Endothelial cell of umbilical vein (primary cell): ENCODE measurements at regions of chr10 and their contacts with region 1.

Region 1: GRCh38 chr10:63166742-63167258 is 33.7 kb downstream of the NRBF2 start:
- DNase-seq: peak; percentile 84
- H3K4me3 ChIP-seq: no peak overlapping the region
- H3K27ac ChIP-seq: no peak overlapping the region
- H3K4me1 ChIP-seq: no peaks in the 10 kb centered on the region
- H3K27me3 ChIP-seq: no peaks in the 10 kb centered on the region
- CTCF ChIP-seq: peak; percentile 61 to 62
- POLR2A ChIP-seq: no peak

Region 2: DNA sequence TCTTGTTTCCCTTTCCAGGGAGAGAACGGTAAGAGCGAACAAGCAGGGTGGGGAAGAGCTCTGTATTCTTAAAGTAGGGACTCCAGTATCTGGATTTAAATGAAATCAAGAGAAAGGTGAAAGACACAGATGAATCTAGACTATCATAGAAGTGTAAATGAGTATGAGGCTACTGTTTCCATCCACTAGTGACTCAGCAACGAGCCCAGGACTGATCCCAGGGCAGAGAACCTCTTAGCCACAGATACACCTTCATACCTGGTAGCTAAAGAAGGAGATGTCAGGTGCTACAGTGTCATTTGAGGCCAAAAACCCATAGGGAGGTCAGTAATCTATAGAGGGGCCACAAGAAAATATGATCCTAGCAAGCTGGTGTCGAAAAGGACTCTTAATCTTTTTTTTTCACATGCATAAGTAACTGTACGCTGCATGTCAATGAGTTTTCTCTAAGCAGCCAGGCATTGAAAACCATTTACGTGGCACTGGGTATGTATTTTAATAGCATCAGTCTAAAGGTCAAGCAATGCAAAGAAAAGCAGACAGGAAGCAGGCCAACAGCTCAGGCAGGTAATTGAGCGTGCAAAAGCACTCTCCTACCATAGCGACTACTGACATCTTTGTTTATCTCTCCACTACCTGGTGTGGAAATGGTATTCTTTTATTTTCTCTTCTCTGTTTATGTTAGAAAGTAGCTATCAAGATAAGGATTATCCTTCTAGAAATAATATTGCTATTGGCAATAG is 259.2 kb before region 1 on chr10:
- CTCF ChIA-PET with region 1: no interaction called
- POLR2A ChIA-PET with region 1: no interaction called
- dilution Hi-C with region 1: no loop called
- intact Hi-C with region 1: no loop called
- DNase-seq: no peak
- H3K4me3 ChIP-seq: no peak overlapping the region
- H3K27ac ChIP-seq: no peak overlapping the region
- H3K4me1 ChIP-seq: no peaks in the 10 kb centered on the region
- H3K27me3 ChIP-seq: no peaks in the 10 kb centered on the region
- CTCF ChIP-seq: no peak
- POLR2A ChIP-seq: no peak

Region 3: DNA sequence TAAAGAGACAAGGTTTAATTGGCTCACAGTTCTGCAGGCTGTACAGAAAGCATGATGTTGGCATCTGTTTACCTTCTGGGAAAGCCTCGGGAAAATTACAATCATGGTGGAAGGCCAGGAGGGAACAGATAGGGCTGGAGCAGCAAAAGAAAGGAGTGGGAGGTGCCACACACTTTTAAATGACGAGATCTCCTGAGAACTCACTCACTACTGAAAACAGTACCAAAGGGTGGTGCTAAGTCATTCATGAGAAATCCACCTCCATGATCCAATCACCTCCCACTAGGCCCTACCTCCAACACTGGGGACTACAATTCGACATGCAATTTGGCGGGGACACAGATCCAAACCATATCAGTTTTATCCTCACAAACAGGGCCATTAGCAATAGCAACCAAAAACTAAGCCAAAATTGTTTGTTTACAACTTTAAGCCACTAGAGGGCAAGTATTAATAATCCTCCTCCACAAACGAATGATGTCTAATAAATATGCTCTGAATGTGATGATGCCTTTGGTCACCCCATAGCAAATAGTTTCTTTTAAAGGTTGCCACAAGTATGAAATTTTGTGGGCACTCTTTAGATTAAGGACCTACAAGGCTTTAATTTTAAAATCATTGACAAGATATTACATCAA is 162.9 kb before region 1 on chr10:
- CTCF ChIA-PET with region 1: no interaction called
- POLR2A ChIA-PET with region 1: no interaction called
- dilution Hi-C with region 1: no loop called
- intact Hi-C with region 1: no loop called
- DNase-seq: no peak
- H3K4me3 ChIP-seq: no peak overlapping the region
- H3K27ac ChIP-seq: no peak overlapping the region
- H3K4me1 ChIP-seq: no peaks in the 10 kb centered on the region
- H3K27me3 ChIP-seq: no peaks in the 10 kb centered on the region
- CTCF ChIP-seq: peak in 1 of 2 donors; percentile 16
- POLR2A ChIP-seq: no peak

Region 4: DNA sequence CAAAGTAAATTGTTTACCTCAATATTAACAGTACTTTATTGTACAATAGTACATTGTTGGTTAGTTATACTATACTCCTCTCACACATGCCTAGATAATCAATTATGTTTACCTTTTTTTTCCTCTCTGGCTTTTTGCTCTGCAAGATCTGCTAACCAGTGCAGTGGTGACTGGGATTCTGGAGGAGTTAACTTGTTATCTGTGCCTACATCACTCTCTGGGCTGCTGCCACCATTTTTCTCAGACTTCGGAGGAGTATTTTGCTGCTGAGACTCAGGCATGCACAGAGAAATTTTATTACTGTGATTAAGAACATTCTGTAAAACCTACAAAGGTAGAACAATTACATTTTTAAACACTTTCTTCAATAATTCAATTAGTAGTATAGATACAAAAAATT is 26.0 kb after region 1 on chr10:
- CTCF ChIA-PET with region 1: interaction called, 20 read pairs
- POLR2A ChIA-PET with region 1: no interaction called
- dilution Hi-C with region 1: no loop called
- intact Hi-C with region 1: no loop called
- DNase-seq: no peak
- H3K4me3 ChIP-seq: no peak overlapping the region
- H3K27ac ChIP-seq: no peak overlapping the region
- H3K4me1 ChIP-seq: no peaks in the 10 kb centered on the region
- H3K27me3 ChIP-seq: no peaks in the 10 kb centered on the region
- CTCF ChIP-seq: no peak
- POLR2A ChIP-seq: no peak

Region 5: GRCh38 chr10:63573068-63573697 is 406.4 kb after region 1 on chr10:
- CTCF ChIA-PET with region 1: interaction called, 13 read pairs
- POLR2A ChIA-PET with region 1: no interaction called
- dilution Hi-C with region 1: no loop called
- intact Hi-C with region 1: no loop called
- DNase-seq: peak; percentile 95
- H3K4me3 ChIP-seq: peak overlapping the region in 1 of 3 experiments; percentile 16
- H3K27ac ChIP-seq: peak overlapping the region; percentile 68
- H3K4me1 ChIP-seq: peaks cover 33% of the 10 kb centered on the region
- H3K27me3 ChIP-seq: no peaks in the 10 kb centered on the region
- CTCF ChIP-seq: no peak
- POLR2A ChIP-seq: no peak

Region 6: DNA sequence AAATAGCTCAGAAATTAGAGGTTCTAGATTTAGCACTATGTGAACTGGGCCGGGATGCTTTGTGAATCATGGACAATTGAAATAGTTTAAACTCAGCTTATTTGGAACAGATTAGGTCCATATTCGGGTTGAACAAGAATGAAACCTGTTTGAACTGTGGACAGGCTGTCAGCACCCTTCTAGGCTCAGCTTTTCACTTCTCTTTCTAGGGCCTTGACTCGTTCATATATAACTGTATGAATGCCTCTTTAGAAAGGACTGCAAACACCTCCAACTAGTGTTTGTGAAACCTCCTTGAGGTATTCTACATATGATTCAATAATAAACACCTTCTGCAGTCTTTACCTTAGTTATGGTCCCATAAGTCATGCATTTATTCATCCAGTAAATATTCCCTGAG is 470.0 kb after region 1 on chr10:
- CTCF ChIA-PET with region 1: interaction called, 229 read pairs
- POLR2A ChIA-PET with region 1: no interaction called
- dilution Hi-C with region 1: no loop called
- intact Hi-C with region 1: loop called (anchors 1 kb)
- DNase-seq: no peak
- H3K4me3 ChIP-seq: no peak overlapping the region
- H3K27ac ChIP-seq: no peak overlapping the region
- H3K4me1 ChIP-seq: no peaks in the 10 kb centered on the region
- H3K27me3 ChIP-seq: no peaks in the 10 kb centered on the region
- CTCF ChIP-seq: no peak
- POLR2A ChIP-seq: no peak

Region 7: GRCh38 chr10:63767138-63767801 is 600.5 kb after region 1 on chr10:
- CTCF ChIA-PET with region 1: interaction called, 114 read pairs
- POLR2A ChIA-PET with region 1: no interaction called
- dilution Hi-C with region 1: no loop called
- intact Hi-C with region 1: loop called (anchors 1 kb)
- DNase-seq: peak; percentile 70
- H3K4me3 ChIP-seq: no peak overlapping the region
- H3K27ac ChIP-seq: no peak overlapping the region
- H3K4me1 ChIP-seq: no peaks in the 10 kb centered on the region
- H3K27me3 ChIP-seq: no peaks in the 10 kb centered on the region
- CTCF ChIP-seq: peak in 1 of 2 donors; percentile 33
- POLR2A ChIP-seq: no peak

Region 8: DNA sequence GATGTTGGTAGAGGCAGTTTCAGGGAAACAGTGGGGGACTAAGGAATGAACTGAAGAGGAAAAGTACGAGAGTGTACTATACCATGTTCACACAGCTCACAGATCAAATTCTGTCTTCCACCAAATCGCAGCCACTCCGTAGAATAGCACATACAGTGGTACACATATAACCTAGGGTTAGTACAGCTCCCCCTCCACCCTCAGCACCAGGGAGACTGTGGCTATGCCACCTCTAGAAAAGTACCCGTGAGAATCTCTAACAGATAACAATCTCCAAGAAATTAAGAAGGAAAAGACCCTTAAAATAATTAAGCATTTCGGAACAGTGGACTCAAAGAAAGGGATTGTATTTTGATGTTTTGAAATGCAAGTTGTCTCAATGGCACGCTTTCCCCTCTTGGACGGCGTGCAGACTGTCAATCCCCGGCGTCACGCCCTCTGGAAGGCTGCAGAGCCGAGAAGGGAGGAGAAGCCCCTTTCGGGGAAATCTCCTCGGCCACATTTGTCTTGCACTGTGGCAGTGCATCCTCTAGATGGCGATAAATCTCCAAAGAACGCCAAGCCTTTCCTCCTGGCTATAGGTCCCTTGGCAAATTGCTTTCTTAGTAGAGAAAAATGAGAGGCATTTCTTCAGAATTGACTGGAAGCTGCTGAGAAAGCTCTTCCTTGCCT is 699.4 kb after region 1 on chr10:
- CTCF ChIA-PET with region 1: interaction called, 19 read pairs
- POLR2A ChIA-PET with region 1: no interaction called
- dilution Hi-C with region 1: no loop called
- intact Hi-C with region 1: no loop called
- DNase-seq: peak; percentile 61
- H3K4me3 ChIP-seq: no peak overlapping the region
- H3K27ac ChIP-seq: no peak overlapping the region
- H3K4me1 ChIP-seq: no peaks in the 10 kb centered on the region
- H3K27me3 ChIP-seq: peaks cover 23 to 25% of the 10 kb centered on the region in 2 experiments
- CTCF ChIP-seq: peak; percentile 78 to 88
- POLR2A ChIP-seq: no peak